Left ventricle myocardium inferior (tissue), 1 donor: ENCODE measurements at regions of chr7 and their contacts with region 1.

Region 1: GRCh38 chr7:14717816-14718215 is 184.7 kb downstream of the DGKB start:
- DNase-seq: no peak
- H3K4me3 ChIP-seq: no peak overlapping the region
- H3K27ac ChIP-seq: no peak overlapping the region
- H3K4me1 ChIP-seq: no peaks in the 10 kb centered on the region
- H3K27me3 ChIP-seq: no peaks in the 10 kb centered on the region
- CTCF ChIP-seq: peak; percentile 73

Region 2: DNA sequence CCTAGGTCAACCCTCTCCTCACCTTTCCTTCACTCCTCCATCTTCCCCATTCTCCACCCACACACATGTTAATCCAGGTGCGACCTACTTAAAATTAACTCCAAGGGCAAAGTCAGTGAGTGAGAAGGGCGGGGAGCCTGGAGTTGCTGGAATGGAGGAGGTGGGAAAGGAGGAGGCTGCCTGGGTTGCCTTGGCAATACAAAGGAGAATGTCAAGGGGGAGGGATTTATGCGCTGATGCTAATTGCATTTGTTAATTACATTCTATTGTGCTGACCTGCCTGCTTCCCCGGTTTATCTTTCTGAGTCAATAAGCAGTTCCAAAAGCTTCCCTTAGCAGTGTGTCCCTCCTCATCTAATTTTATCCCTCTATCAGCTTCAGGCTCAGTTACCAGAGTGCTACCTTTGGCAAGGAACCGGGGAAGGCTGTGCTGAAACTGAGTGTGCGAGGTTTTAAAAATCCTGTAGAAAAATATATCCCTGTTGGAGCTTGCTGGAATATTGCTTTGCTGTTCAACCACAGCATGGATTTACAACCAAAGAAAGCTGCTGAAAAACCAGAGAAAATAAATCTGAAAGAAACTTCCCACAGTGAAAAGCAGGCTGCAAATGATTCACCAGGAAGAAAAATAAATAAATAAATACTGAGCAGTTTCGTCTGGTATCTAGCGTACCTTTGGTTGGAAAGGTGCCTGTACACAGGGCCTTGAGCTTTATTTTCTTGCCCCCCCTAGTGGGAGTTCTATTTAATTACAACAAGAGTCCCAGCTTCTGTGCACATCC is 297.9 kb after region 1 on chr7:
- intact Hi-C with region 1: loop called (anchors 5 kb)
- DNase-seq: no peak
- H3K4me3 ChIP-seq: peak overlapping the region; percentile 51
- H3K27ac ChIP-seq: peak overlapping the region; percentile 85
- H3K4me1 ChIP-seq: peaks cover 18% of the 10 kb centered on the region
- H3K27me3 ChIP-seq: no peaks in the 10 kb centered on the region
- CTCF ChIP-seq: peak; percentile 76